Breast epithelium (tissue), 4 donors: ENCODE measurements at regions of chr19 and their contacts with region 1.

Region 1: GRCh38 chr19:39470724-39471339 is 9.8 kb upstream of the TIMM50 start:
- DNase-seq: no peak
- H3K4me3 ChIP-seq: no peak overlapping the region
- H3K27ac ChIP-seq: no peak overlapping the region
- H3K4me1 ChIP-seq: no peaks in the 10 kb centered on the region
- H3K27me3 ChIP-seq: no peaks in the 10 kb centered on the region
- CTCF ChIP-seq: no peak
- POLR2A ChIP-seq: no peak

Region 2: DNA sequence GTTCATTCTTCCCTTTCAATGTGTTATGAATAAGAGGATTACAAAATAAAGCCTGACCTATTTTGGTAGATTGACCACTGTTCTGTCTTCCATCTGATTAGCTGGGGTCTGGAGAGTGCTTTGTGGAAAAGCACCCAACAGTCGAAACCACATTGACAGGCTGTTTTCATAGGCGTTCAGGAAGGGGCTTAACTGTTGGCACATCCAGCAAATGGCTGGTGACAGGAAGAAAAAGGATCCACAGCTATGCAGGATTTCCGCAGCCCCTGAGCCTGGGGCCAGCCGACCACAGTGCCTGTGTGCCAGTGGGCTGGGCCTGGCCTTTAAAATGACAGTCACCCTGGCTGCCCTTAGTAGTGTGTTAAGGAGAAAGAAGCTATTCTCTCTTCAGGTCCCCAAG is 1450.5 kb before region 1 on chr19:
- intact Hi-C with region 1: no loop called
- DNase-seq: no peak
- H3K4me3 ChIP-seq: no peak overlapping the region
- H3K27ac ChIP-seq: no peak overlapping the region
- H3K4me1 ChIP-seq: no peaks in the 10 kb centered on the region
- H3K27me3 ChIP-seq: no peaks in the 10 kb centered on the region
- CTCF ChIP-seq: no peak
- POLR2A ChIP-seq: no peak

Region 3: DNA sequence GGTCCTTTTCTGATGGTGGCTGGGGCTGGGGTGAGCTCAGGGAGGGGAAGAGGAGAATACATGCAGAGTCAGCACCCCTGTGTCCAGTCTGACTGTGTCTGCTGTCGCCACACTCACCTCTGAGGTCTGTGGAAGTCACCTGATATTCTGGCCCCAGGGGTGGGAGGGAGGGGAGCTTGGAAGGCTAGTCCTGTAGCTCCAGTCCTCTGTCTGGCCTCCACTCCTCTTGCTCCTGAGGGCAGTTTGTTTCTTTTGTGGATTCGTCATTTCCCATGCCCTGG is 49.3 kb after region 1 on chr19:
- intact Hi-C with region 1: no loop called
- DNase-seq: no peak
- H3K4me3 ChIP-seq: no peak overlapping the region
- H3K27ac ChIP-seq: no peak overlapping the region
- H3K4me1 ChIP-seq: no peaks in the 10 kb centered on the region
- H3K27me3 ChIP-seq: peaks cover 5 to 13% of the 10 kb centered on the region in 2 donors
- CTCF ChIP-seq: no peak
- POLR2A ChIP-seq: no peak

Region 4: GRCh38 chr19:39532233-39533002 is 61.6 kb after region 1 on chr19 and contains the start of gene EID2B:
- intact Hi-C with region 1: loop called (anchors 2 kb)
- DNase-seq: peak; percentile 91 to 95
- H3K4me3 ChIP-seq: peak within 1 kb of the TSS; percentile 81 to 93 (median 88)
- H3K27ac ChIP-seq: peak within 1 kb of the TSS; percentile 80 to 88
- H3K4me1 ChIP-seq: no peaks in the 10 kb centered on the region
- H3K27me3 ChIP-seq: no peaks in the 10 kb centered on the region
- CTCF ChIP-seq: peak; percentile 96 to 99 (median 99)
- POLR2A ChIP-seq: no peak
- total RNA-seq, gene EID2B: 3.4 to 5.6 (median 4.3) TPM

Region 5: GRCh38 chr19:39557441-39558151 is 86.8 kb after region 1 on chr19:
- intact Hi-C with region 1: no loop called
- DNase-seq: no peak
- H3K4me3 ChIP-seq: peak overlapping the region in 1 of 3 donors; percentile 37
- H3K27ac ChIP-seq: no peak overlapping the region
- H3K4me1 ChIP-seq: no peaks in the 10 kb centered on the region
- H3K27me3 ChIP-seq: peaks cover 0 to 3% of the 10 kb centered on the region in 2 donors
- CTCF ChIP-seq: no peak
- POLR2A ChIP-seq: no peak